ENCODE measurements at regions of chr17 and their contacts with region 1.

Region 1: GRCh38 chr17:1716076-1716995 is 6.2 kb upstream of the TLCD2 start:
- DNase-seq: peak; percentile 100
- ATAC-seq: peak; percentile 90
- H3K4me3 ChIP-seq: peak overlapping the region; percentile 93 to 97
- H3K27ac ChIP-seq: peak overlapping the region; percentile 99
- H3K4me1 ChIP-seq: no peaks in the 10 kb centered on the region
- H3K27me3 ChIP-seq: no peaks in the 10 kb centered on the region

Region 2: GRCh38 chr17:1573916-1574696 is 142.2 kb before region 1 on chr17:
- intact Hi-C with region 1: loop called in 1 of 2 experiments (anchors 2 kb)
- DNase-seq: peak; percentile 91 to 96
- ATAC-seq: peak; percentile 86
- H3K4me3 ChIP-seq: no peak overlapping the region
- H3K27ac ChIP-seq: no peak overlapping the region
- H3K4me1 ChIP-seq: no peaks in the 10 kb centered on the region
- H3K27me3 ChIP-seq: no peaks in the 10 kb centered on the region

Region 3: GRCh38 chr17:1648963-1649843 is 67.1 kb before region 1 on chr17:
- intact Hi-C with region 1: loop called (anchors 2 to 5 kb)
- DNase-seq: peak; percentile 97 to 98
- ATAC-seq: peak; percentile 87
- H3K4me3 ChIP-seq: peak overlapping the region; percentile 62 to 73
- H3K27ac ChIP-seq: peak overlapping the region in 1 of 2 donors; percentile 79
- H3K4me1 ChIP-seq: no peaks in the 10 kb centered on the region
- H3K27me3 ChIP-seq: no peaks in the 10 kb centered on the region

Region 4: GRCh38 chr17:1673041-1673785 is 43.1 kb before region 1 on chr17:
- intact Hi-C with region 1: loop called in 1 of 2 experiments (anchors 5 kb)
- DNase-seq: no peak
- ATAC-seq: no peak
- H3K4me3 ChIP-seq: no peak overlapping the region
- H3K27ac ChIP-seq: no peak overlapping the region
- H3K4me1 ChIP-seq: no peaks in the 10 kb centered on the region
- H3K27me3 ChIP-seq: no peaks in the 10 kb centered on the region

Region 5: GRCh38 chr17:1829592-1830257 is 113.4 kb after region 1 on chr17 and contains the starts of genes RPA1 and SMYD4:
- intact Hi-C with region 1: loop called (anchors 2 to 10 kb)
- DNase-seq: peak; percentile 93 to 97
- ATAC-seq: peak; percentile 99
- H3K4me3 ChIP-seq: peak within 1 kb of the TSS; percentile 58 to 76
- H3K27ac ChIP-seq: peak within 1 kb of the TSS in 1 of 2 donors; percentile 27
- H3K4me1 ChIP-seq: no peaks in the 10 kb centered on the region
- H3K27me3 ChIP-seq: no peaks in the 10 kb centered on the region
- total RNA-seq, gene RPA1: 65.0 to 75.0 TPM
- total RNA-seq, gene SMYD4: 15.0 to 19.2 TPM

Measured in aorta (tissue), 5 donors.